Calu3 (cell line): ENCODE measurements at regions of chr16 and their contacts with region 1.

Region 1: GRCh38 chr16:85420501-85421337 is 192.4 kb upstream of the GSE1 start:
- DNase-seq: peak; percentile 85
- H3K4me3 Mint-ChIP-seq: no peak overlapping the region
- H3K27ac Mint-ChIP-seq: no peak overlapping the region
- H3K4me1 Mint-ChIP-seq: peaks cover 38% of the 10 kb centered on the region
- H3K27me3 Mint-ChIP-seq: peaks cover 42% of the 10 kb centered on the region
- CTCF ChIP-seq: peak; percentile 100

Region 2: DNA sequence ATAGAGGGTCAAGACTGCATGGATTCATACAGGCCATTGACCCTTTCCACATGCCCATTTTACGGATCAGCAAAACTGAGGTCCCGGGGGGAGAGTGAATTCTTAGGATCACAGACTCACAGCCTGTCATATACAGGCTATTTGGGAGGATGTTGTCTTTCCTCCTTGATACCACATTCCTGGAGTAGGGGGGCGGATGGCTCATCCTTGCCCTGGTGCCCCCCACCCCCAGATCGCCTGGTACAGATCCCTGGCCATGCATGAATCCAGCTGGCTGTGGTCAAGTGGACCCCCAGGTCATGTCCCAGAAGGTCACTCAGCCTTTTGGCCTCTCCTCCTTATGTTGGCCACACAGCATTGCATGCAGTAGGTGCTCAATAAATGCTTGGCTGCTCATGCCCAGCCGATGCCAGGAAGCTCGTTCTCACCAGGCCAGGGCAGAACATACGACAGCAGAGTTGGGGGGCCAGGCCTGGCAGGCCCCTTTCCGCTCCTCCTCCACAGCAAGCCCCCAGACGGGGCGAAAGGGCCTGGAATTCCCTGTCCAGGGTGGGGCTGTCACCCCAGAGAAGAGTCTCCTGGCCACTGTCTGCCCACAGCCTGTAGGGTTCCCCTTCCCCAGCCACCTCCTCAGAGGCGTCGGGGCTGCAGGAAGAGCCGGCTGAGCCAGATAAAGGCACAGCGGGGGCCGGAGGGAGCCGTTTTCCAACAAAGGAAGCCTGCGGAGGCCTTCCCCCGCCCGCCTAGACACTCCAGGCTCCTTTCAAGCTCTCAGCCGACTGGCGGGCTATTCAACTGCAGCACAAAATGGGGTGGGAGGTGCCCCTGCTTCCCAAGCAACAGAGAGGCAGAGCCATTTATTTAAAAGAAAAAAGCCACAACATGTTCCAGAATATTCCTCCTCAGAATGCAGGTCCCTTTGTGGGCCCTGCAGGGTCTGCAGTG is 92.7 kb before region 1 on chr16:
- CTCF ChIA-PET with region 1: no interaction called
- intact Hi-C with region 1: no loop called
- DNase-seq: no peak
- H3K4me3 Mint-ChIP-seq: no peak overlapping the region
- H3K27ac Mint-ChIP-seq: no peak overlapping the region
- H3K4me1 Mint-ChIP-seq: no peaks in the 10 kb centered on the region
- H3K27me3 Mint-ChIP-seq: peaks cover 85% of the 10 kb centered on the region
- CTCF ChIP-seq: no peak

Region 3: DNA sequence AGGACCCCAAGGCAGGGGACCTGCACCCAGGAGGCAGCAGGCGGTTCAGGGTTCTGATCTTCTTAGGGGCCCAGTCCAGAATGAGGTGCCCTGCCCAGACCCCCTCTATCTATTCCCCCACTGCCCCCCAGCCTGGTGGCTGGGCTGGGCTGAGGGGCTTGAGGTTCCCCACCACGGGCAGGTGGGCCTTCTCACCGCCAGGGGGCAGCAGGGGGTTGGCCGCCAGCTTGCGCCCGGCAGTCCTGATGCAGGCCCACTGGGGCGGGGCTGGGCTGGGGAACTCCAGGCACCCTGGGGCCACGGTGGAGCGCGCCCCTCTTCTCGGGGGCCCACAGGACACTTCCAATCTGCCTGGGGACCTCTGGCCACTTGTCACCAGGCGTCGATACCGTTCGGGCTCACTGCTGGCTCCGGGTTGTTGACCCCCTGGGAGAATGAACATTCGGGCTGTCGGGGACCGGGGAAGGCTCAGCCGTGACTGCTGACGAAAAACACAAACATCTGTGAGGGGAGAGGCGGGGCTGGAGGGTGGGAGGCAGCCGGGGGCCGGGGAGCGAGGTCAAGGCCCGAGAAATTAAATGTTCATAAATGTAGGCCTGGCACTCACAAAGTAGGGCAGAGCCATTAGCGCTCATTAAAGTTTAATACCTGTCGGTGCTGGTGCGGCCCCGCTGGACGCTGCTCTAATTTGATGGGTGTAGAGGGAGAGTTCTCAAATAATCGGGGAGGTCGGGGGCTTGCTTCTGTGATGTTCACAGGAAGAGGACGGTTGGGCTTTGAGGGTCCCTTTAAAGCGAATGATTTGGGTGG is 26.8 kb before region 1 on chr16:
- CTCF ChIA-PET with region 1: interaction called, 11 read pairs
- intact Hi-C with region 1: no loop called
- DNase-seq: peak; percentile 86
- H3K4me3 Mint-ChIP-seq: no peak overlapping the region
- H3K27ac Mint-ChIP-seq: no peak overlapping the region
- H3K4me1 Mint-ChIP-seq: peaks cover 11% of the 10 kb centered on the region
- H3K27me3 Mint-ChIP-seq: peaks cover 77% of the 10 kb centered on the region
- CTCF ChIP-seq: peak; percentile 98

Region 4: DNA sequence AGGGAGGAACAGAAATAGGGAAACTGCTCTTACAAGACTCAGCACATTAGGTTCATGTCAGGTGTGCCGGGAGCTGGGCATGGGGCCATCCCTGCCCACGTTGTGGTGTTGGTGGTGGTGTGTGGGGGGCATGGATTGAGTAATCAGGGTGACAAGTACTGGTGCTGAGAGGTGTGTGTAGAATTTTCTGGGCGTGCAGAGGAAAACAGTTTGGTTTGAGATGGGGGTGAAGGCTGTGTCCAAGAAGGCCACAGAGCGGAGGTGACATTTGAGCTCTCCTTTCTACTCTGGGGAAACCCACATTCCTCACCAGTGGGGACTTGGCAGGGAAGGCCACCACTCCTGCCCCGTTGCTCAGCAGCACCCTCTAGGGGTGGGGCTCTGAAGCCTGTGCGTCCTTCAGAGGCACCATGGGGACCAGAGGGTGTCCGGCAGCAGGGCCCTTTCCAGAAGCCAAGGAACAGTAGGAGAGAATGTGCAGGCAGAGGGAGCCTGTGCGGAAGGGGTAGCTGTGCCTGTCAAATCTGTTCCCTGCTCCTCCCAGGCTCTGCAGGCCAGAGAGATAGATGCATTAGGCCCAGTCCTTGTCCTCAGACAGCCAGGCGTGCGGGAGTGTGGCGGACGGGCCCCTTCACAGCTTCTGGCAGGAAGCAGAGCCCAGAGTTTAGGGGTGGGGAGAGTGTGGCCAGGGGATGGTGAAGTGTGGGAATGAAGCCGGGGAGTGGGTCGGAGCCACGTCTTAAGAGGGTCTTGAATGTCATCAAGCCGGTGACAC is 143.7 kb after region 1 on chr16:
- CTCF ChIA-PET with region 1: interaction called, 22 read pairs
- intact Hi-C with region 1: loop called (anchors 2 kb)
- DNase-seq: peak; percentile 75
- H3K4me3 Mint-ChIP-seq: no peak overlapping the region
- H3K27ac Mint-ChIP-seq: peak overlapping the region; percentile 5
- H3K4me1 Mint-ChIP-seq: peaks cover 14% of the 10 kb centered on the region
- H3K27me3 Mint-ChIP-seq: peaks cover 13% of the 10 kb centered on the region
- CTCF ChIP-seq: peak; percentile 85

Region 5: GRCh38 chr16:85610508-85611332 is 190.0 kb after region 1 on chr16:
- CTCF ChIA-PET with region 1: interaction called, 13 read pairs
- intact Hi-C with region 1: loop called (anchors 2 kb)
- DNase-seq: peak; percentile 95
- H3K4me3 Mint-ChIP-seq: peak overlapping the region; percentile 76
- H3K27ac Mint-ChIP-seq: peak overlapping the region; percentile 61
- H3K4me1 Mint-ChIP-seq: peaks cover 8% of the 10 kb centered on the region
- H3K27me3 Mint-ChIP-seq: peaks cover 43% of the 10 kb centered on the region
- CTCF ChIP-seq: peak; percentile 99

Region 6: DNA sequence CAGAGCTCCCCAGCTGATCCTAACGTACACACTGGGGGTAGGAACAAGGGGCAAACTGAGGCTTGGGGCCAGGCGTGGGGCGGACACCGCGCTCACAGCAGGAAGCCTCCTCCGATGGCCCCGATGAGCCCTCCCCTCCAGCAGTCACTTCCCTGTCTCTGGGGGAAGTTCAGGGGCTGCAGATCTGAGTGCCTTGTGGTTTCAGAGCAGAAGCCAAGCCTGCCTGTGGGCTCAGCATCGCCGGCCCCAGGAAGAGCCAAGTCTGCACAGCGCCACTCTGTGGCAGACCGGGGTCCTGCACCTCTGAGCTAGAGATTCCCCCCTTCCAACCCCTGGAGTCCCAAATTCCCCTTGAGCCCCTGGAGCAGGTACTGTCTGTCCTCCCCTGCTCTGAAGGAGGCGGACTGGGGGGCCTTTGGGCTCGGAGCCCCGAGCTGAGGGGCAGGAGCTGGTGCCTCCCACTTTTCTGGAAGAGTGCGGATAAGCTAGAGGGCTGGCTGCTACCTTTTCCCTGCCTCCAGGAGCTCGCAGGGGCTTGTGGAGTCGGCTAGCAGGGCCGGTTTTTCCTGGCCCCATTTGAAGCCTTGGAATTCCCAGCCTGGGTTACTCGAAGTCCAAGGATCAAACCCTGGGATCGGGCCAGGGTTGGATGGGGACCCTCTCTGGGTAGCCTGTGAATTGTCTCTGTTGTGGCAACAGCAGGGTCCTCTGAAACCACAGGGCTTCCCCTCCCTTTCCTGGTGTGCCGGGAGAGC is 195.3 kb after region 1 on chr16:
- CTCF ChIA-PET with region 1: interaction called, 13 read pairs
- intact Hi-C with region 1: loop called (anchors 2 kb)
- DNase-seq: peak; percentile 75
- H3K4me3 Mint-ChIP-seq: peak overlapping the region; percentile 76
- H3K27ac Mint-ChIP-seq: peak overlapping the region; percentile 71
- H3K4me1 Mint-ChIP-seq: peaks cover 37% of the 10 kb centered on the region
- H3K27me3 Mint-ChIP-seq: no peaks in the 10 kb centered on the region
- CTCF ChIP-seq: peak; percentile 84